ENCODE measurements at regions of chr12 and their contacts with region 1.

Region 1: GRCh38 chr12:89019408-89020120 is 332.7 kb downstream of the DUSP6 start:
- DNase-seq: peak; percentile 86
- H3K4me3 Mint-ChIP-seq: no peak overlapping the region
- H3K27ac Mint-ChIP-seq: no peak overlapping the region
- H3K4me1 Mint-ChIP-seq: peaks cover 6% of the 10 kb centered on the region
- H3K27me3 Mint-ChIP-seq: peaks cover 3% of the 10 kb centered on the region

Region 2: DNA sequence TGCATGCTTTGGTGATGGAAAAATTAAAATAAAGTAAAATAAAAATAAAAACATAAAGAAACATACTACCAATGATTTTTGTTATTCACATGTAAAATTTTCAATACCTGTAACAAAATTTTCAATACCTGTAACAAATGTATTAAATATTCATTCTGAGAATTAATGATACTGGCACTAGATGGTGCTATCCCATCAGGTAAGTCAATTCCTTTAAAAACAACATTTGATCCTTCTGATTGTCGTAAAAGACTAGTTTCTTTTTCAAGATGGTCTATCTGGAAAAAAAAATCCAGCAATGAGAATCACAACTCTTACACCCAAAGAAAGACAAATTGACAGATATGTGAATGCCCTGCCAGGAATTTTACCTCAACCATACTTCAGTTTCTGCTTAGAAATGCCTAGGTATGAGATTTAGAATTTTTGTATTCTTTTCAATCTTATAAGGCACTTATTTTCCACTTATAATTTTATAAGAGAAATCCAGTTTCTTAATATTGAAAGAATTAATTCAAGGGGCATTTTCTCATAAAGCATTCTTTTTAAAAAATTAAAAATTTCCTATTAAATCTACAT is 908.4 kb before region 1 on chr12:
- CTCF ChIA-PET with region 1: no interaction called
- intact Hi-C with region 1: loop called (anchors 1 kb)
- DNase-seq: no peak
- H3K4me3 Mint-ChIP-seq: no peak overlapping the region
- H3K27ac Mint-ChIP-seq: no peak overlapping the region
- H3K4me1 Mint-ChIP-seq: peaks cover 2% of the 10 kb centered on the region
- H3K27me3 Mint-ChIP-seq: no peaks in the 10 kb centered on the region

Region 3: GRCh38 chr12:89162704-89163261 is 143.2 kb after region 1 on chr12:
- CTCF ChIA-PET with region 1: interaction called, 3 read pairs
- intact Hi-C with region 1: loop called (anchors 1 kb)
- DNase-seq: peak; percentile 81
- H3K4me3 Mint-ChIP-seq: no peak overlapping the region
- H3K27ac Mint-ChIP-seq: no peak overlapping the region
- H3K4me1 Mint-ChIP-seq: peaks cover 8% of the 10 kb centered on the region
- H3K27me3 Mint-ChIP-seq: no peaks in the 10 kb centered on the region

Region 4: GRCh38 chr12:89470741-89471509 is 451.4 kb after region 1 on chr12:
- CTCF ChIA-PET with region 1: interaction called, 35 read pairs
- intact Hi-C with region 1: no loop called
- DNase-seq: no peak
- H3K4me3 Mint-ChIP-seq: no peak overlapping the region
- H3K27ac Mint-ChIP-seq: no peak overlapping the region
- H3K4me1 Mint-ChIP-seq: peaks cover 44% of the 10 kb centered on the region
- H3K27me3 Mint-ChIP-seq: no peaks in the 10 kb centered on the region

Region 5: GRCh38 chr12:89663577-89664357 is 644.2 kb after region 1 on chr12:
- CTCF ChIA-PET with region 1: no interaction called
- intact Hi-C with region 1: loop called (anchors 10 kb)
- DNase-seq: peak; percentile 38
- H3K4me3 Mint-ChIP-seq: peak overlapping the region; percentile 16
- H3K27ac Mint-ChIP-seq: peak overlapping the region; percentile 55
- H3K4me1 Mint-ChIP-seq: peaks cover 65% of the 10 kb centered on the region
- H3K27me3 Mint-ChIP-seq: no peaks in the 10 kb centered on the region

Region 6: DNA sequence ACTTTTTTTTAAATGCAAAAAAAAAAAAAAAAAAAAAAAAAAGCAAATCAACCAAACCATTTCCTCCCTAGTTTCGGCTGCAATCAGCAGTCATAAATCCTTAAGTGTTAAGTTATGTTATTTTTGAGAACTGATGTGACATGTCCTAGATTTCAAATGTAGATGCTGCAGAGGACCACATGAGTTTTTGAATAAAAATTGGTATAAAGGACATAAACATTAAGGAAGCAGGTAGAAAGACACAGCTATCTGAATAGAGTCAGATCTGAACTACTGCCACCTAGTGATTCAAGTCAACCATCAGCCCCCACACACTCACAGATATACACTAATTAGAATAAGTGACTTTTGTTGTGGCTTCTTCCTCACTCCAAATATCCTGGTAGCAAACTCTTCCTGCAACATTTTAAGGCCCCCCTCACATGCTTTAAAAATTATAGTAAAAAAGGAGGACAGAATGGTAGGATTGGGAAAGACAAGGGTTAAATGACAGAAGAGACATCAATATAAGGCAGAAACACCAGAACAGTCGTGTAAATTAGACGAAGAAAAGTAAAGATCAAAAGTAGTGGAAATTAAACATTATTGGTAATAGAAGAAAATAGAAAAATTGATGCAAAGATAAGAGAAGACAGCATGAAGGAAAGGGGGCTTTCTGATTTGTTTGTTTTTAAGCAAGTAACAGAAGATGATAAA is 1083.5 kb after region 1 on chr12:
- CTCF ChIA-PET with region 1: no interaction called
- intact Hi-C with region 1: loop called (anchors 1 kb)
- DNase-seq: peak; percentile 32
- H3K4me3 Mint-ChIP-seq: no peak overlapping the region
- H3K27ac Mint-ChIP-seq: no peak overlapping the region
- H3K4me1 Mint-ChIP-seq: peaks cover 8% of the 10 kb centered on the region
- H3K27me3 Mint-ChIP-seq: peaks cover 7% of the 10 kb centered on the region

Measured in activated naive CD4-positive, alpha-beta T cell treated with anti-CD3 and anti-CD28 coated beads for 36 hours (primary cell).